Heart left ventricle (tissue), 16 donors: ENCODE measurements at regions of chr12 and their contacts with region 1.

Region 1: DNA sequence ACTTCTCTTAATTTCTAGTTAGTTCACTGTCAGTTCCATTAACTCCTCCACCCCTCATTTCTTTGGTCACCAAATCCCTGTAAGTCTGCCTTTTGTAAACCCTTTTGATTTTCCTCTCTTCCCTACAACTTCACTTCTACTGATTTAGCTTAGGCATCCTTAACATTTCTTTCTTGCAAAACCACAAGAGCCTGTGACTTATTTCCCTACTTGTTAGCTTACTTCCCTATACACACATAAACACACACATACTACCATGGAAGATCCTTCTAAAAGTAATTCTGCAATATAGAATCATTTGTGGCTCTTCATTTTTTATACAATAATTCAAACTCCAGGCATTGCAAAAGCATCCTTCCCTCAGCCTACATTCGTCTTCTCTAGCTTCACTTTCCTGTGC is 494.3 kb upstream of the USP15 start:
- DNase-seq: no peak
- ATAC-seq: no peak
- H3K4me3 ChIP-seq: no peak overlapping the region
- H3K27ac ChIP-seq: no peak overlapping the region
- H3K4me1 ChIP-seq: no peaks in the 10 kb centered on the region
- H3K27me3 ChIP-seq: no peaks in the 10 kb centered on the region
- CTCF ChIP-seq: no peak
- POLR2A ChIP-seq: no peak

Region 2: GRCh38 chr12:61717986-61718385 is 47.9 kb before region 1 on chr12:
- intact Hi-C with region 1: no loop called
- DNase-seq: no peak
- ATAC-seq: no peak
- H3K4me3 ChIP-seq: no peak overlapping the region
- H3K27ac ChIP-seq: no peak overlapping the region
- H3K4me1 ChIP-seq: no peaks in the 10 kb centered on the region
- H3K27me3 ChIP-seq: no peaks in the 10 kb centered on the region
- CTCF ChIP-seq: no peak
- POLR2A ChIP-seq: no peak

Region 3: GRCh38 chr12:61821381-61821780 is 55.5 kb after region 1 on chr12:
- intact Hi-C with region 1: loop called in 1 of 10 experiments (anchors 5 kb)
- DNase-seq: no peak
- ATAC-seq: no peak
- H3K4me3 ChIP-seq: no peak overlapping the region
- H3K27ac ChIP-seq: no peak overlapping the region
- H3K4me1 ChIP-seq: no peaks in the 10 kb centered on the region
- H3K27me3 ChIP-seq: no peaks in the 10 kb centered on the region
- CTCF ChIP-seq: no peak
- POLR2A ChIP-seq: no peak